GM12878 (cell line): ENCODE measurements at regions of chr11 and their contacts with region 1.

Region 1: GRCh38 chr11:11798586-11799438 is 43.0 kb upstream of the USP47 start:
- DNase-seq: no peak
- ATAC-seq: peak; percentile 89
- H3K4me3 ChIP-seq: no peak overlapping the region
- H3K27ac ChIP-seq: no peak overlapping the region
- H3K4me1 ChIP-seq: no peaks in the 10 kb centered on the region
- H3K27me3 ChIP-seq: peaks cover 0 to 3% of the 10 kb centered on the region in 2 experiments; a peak in 1 of 4 replicates
- CTCF ChIP-seq: peak; percentile 63 to 69 (median 65)
- EP300 ChIP-seq: no peak
- POLR2A ChIP-seq: no peak
- RAD21 ChIP-seq: peak; percentile 75

Region 2: GRCh38 chr11:11895672-11896071 is 96.9 kb after region 1 on chr11:
- CTCF ChIA-PET with region 1: no interaction called
- POLR2A ChIA-PET with region 1: no interaction called
- RAD21 ChIA-PET with region 1: no interaction called
- SMC1A ChIA-PET with region 1: no interaction called
- in situ Hi-C with region 1: no loop called
- intact Hi-C with region 1: loop called (anchors 5 kb)
- DNase-seq: no peak
- ATAC-seq: no peak
- H3K4me3 ChIP-seq: no peak overlapping the region
- H3K27ac ChIP-seq: no peak overlapping the region
- H3K4me1 ChIP-seq: no peaks in the 10 kb centered on the region
- H3K27me3 ChIP-seq: no peaks in the 10 kb centered on the region
- CTCF ChIP-seq: 0 out of 6 replicates have a peak, but pooled peaks of 1 of the 3 experiments have one; percentile 3
- EP300 ChIP-seq: no peak
- POLR2A ChIP-seq: no peak
- RAD21 ChIP-seq: no peak

Region 3: DNA sequence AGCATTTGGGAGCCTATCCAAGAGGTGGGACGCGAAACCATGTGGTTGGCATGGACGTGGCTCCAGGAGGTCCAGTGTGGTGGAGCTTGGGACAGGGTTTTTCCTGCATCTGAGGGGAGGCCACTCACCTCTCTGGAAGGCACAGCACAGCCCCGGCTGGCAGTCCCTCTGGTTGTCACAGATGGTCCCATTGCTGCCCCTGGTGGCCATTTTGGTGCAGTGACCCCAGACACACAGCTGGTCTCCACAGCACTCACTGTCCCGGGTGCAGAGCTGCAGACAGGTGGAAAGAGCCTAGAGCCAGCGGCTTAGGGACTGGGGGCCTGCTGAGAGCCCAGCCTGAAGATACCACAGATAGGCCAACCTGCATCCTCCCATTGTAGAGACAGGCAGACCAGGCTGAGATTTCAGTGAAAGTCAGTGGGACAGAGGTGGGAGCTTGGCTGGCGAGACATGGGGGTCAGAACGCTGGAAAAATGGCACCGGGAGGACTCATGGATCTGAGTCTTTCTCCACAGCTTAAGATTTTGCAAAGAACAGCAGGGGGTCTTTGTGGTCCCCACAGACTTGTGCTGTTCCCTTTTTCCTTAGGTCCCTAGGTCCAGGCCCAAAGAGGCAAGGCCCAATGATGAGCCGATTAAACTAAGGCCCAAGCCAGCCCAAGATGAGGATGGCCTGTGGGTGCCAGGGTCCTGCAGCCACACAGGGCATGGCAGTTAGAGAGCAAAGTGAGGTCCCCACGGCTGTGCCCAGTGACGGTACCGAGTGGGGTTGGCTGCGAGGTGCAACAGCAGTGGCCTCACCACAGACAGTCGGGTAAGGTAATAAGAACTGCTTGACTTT is 168.2 kb after region 1 on chr11:
- CTCF ChIA-PET with region 1: interaction called, 3 read pairs
- POLR2A ChIA-PET with region 1: no interaction called
- RAD21 ChIA-PET with region 1: no interaction called
- SMC1A ChIA-PET with region 1: interaction called, 4 read pairs
- in situ Hi-C with region 1: no loop called
- intact Hi-C with region 1: loop called (anchors 2 kb)
- DNase-seq: no peak
- ATAC-seq: peak; percentile 98
- H3K4me3 ChIP-seq: no peak overlapping the region
- H3K27ac ChIP-seq: no peak overlapping the region
- H3K4me1 ChIP-seq: no peaks in the 10 kb centered on the region
- H3K27me3 ChIP-seq: no peaks in the 10 kb centered on the region; a peak in 3 of 4 replicates
- CTCF ChIP-seq: peak; percentile 83 to 90 (median 84)
- EP300 ChIP-seq: no peak
- POLR2A ChIP-seq: no peak
- RAD21 ChIP-seq: peak; percentile 55